PC-9 (cell line): ENCODE measurements at regions of chr5 and their contacts with region 1.

Region 1: GRCh38 chr5:157743163-157744050 is at the start of gene LSM11:
- DNase-seq: peak; percentile 66 to 94
- H3K4me3 ChIP-seq: peak within 1 kb of the TSS; percentile 89
- H3K27ac ChIP-seq: no peak within 1 kb of the TSS
- H3K4me1 ChIP-seq: peaks cover 12% of the 10 kb centered on the region
- H3K27me3 ChIP-seq: no peaks in the 10 kb centered on the region
- CTCF ChIP-seq: peak; percentile 95
- total RNA-seq, gene LSM11: 1.9 and 2.1 TPM in 2 replicates

Region 2: DNA sequence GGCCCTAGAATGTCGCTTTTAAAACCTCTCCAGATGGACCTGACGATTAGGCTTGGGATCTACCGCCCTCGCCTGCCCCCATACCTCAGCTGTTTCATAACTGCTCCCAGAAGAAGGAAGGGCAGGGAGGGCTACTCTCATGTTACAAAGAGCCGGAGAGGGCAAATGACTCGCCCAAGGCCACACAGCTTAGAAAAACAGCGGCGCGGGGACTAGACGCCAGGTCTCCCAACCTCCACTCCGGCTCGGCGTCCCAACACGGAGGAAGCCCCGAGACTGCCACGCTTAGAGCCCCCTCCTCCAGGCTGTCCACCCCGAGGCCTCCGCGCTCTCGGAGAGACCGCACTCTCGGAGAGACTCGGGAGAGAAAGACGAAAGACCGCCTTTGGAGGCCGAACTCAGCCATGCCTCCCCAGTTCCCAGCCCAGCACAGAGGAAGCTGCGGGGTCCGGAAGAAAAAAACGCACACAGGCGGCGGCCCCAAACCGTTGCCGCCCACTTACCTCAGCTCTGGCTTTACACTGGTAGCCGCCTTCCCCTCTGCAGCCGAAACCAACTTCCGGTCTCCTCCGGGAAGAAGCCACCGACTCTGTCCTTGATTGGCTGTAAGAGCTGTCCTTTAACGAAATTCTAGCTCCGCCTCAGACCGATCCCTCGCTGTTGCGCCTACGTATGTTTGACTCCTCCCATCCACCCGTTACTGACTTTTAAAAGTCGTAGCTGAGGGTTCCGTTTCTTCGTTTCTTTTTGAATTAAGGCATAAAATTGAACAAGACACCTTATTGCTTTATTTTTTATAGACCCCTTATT is 600.9 kb before region 1 on chr5 and contains the start of gene MED7:
- CTCF ChIA-PET with region 1: no interaction called
- POLR2A ChIA-PET with region 1: interaction called, 8 read pairs
- intact Hi-C with region 1: loop called (anchors 2 kb)
- DNase-seq: peak; percentile 93
- H3K4me3 ChIP-seq: peak within 1 kb of the TSS; percentile 69
- H3K27ac ChIP-seq: peak within 1 kb of the TSS; percentile 57
- H3K4me1 ChIP-seq: peaks cover 11% of the 10 kb centered on the region
- H3K27me3 ChIP-seq: peaks cover 5% of the 10 kb centered on the region; the same call in 1 of the 2 replicates
- CTCF ChIP-seq: no peak
- total RNA-seq, gene MED7: 9.4 and 11.8 TPM in 2 replicates

Region 3: DNA sequence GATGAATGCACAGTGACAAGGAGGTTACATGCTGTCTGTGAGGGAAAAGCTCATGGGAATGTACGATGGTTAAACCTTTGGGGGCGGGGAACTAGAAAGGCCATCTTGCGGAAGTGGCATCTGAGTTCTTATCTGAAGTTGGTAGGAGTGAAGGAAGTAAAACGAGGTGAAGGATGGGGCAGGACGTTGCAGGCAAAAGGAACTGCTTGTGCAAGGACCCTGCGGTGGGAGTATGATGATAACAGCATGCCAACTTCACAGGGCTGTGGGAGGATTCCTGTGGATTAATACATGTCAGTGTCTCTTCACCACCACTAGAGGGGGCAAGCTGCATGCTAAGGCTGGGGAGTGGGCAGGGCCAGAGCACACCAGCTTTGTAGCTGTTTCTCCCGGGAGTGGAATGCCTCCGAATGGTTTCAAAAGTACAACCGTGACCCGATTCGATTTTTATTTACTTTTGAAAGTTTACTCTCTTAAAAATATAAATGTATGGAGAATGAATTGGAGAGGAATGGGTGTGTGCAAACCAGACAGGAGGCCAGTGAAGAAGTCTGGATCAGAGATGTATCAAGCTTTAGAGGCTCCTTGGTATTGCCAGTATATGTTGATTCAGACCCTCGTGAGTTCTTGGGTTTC is 415.0 kb before region 1 on chr5:
- CTCF ChIA-PET with region 1: interaction called, 13 read pairs
- POLR2A ChIA-PET with region 1: no interaction called
- intact Hi-C with region 1: loop called (anchors 1 kb)
- DNase-seq: peak; percentile 50 to 61
- H3K4me3 ChIP-seq: peak overlapping the region; percentile 46; the same call in 1 of the 2 replicates
- H3K27ac ChIP-seq: no peak overlapping the region
- H3K4me1 ChIP-seq: 0 out of 2 replicates have a peak, but pooled peaks cover 4% of the 10 kb centered on the region
- H3K27me3 ChIP-seq: 0 out of 2 replicates have a peak, but pooled peaks cover 5% of the 10 kb centered on the region
- CTCF ChIP-seq: peak; percentile 91

Region 4: GRCh38 chr5:157366741-157367674 is 376.4 kb before region 1 on chr5:
- CTCF ChIA-PET with region 1: no interaction called
- POLR2A ChIA-PET with region 1: no interaction called
- intact Hi-C with region 1: loop called (anchors 1 kb)
- DNase-seq: no peak
- H3K4me3 ChIP-seq: no peak overlapping the region
- H3K27ac ChIP-seq: no peak overlapping the region
- H3K4me1 ChIP-seq: no peaks in the 10 kb centered on the region
- H3K27me3 ChIP-seq: no peaks in the 10 kb centered on the region
- CTCF ChIP-seq: peak; percentile 67

Region 5: DNA sequence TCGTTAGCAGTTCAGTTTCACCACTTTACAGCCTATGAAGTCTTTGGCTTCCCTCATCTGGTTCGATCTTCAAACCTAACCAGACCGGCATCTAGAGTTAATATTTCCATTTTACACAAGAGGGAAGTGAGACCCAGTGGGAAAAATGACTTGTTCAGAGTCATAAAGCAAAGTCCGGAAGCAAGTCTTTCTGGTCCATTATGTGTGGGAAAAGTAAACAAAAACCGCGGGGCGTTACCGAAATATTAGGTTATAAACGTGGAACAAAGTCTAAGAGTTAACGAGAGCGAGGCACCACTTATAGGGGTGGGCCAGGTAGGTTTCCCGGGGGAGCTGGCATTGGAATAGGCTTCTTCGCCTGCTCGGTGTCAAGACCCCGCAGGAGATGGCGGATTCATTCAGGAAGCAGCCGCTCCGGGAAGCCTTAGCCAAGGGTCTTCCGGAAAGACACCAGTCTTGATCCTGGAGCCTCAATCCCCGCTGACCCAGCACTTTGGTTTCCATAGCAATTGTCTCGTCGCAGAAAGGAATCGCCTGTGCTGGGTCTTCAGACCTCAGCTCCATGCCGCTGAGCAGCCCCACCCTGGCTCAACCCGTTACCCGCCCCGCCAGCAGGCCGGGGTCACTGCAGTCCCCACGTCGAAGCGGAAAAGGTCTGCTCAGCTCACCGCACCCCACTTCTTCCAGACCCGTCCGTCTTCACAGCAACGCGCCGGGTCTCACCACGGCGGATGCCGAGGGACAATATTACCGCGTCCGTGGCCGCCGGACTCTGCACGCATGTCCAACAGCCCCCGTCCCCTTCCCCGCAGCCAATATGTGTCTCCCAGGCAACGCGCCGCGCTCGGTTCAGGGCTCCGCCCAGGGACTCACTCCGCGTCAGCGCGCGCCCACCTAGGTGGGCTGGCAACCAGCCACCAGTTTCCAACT is 72.5 kb before region 1 on chr5 and contains the start of gene C5orf52:
- CTCF ChIA-PET with region 1: interaction called, 3 read pairs
- POLR2A ChIA-PET with region 1: no interaction called
- intact Hi-C with region 1: loop called (anchors 1 kb)
- DNase-seq: no peak
- H3K4me3 ChIP-seq: no peak within 1 kb of the TSS
- H3K27ac ChIP-seq: no peak within 1 kb of the TSS
- H3K4me1 ChIP-seq: peaks cover 3% of the 10 kb centered on the region
- H3K27me3 ChIP-seq: no peaks in the 10 kb centered on the region
- CTCF ChIP-seq: no peak
- total RNA-seq, gene C5orf52: not detected in 2 replicates

Region 6: DNA sequence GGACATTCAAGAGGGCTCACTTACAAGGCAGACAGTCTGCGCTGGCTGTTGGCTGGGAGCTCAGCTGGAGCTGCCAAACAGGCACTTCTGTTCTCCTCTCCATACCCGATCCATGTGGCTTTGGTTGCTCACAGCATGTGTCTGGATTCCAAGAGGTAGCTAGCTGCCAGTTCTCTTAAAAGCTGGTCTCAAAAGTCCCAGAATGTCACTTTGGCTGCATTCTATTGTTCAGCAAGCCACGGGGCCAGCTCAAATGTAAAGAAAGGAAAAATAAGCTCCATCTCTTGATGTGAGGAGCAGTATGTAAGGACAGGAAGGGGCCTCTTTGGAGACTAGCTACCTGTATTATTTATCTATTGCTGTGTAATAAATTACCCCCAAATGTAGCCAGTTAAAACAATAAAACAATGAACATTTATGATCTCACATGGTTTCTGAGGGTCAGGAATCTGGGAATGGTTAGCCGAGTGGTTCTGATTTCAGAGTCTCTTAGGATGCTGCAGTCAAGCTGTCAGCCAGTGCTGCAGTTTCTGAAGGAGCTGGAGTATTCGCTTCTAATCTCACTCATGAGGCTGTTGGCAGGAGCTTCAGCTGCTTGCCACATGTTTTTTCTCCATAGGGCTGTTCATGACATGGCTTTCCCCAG is 228.3 kb after region 1 on chr5:
- CTCF ChIA-PET with region 1: no interaction called
- POLR2A ChIA-PET with region 1: no interaction called
- intact Hi-C with region 1: no loop called
- DNase-seq: no peak
- H3K4me3 ChIP-seq: no peak overlapping the region
- H3K27ac ChIP-seq: no peak overlapping the region
- H3K4me1 ChIP-seq: no peaks in the 10 kb centered on the region
- H3K27me3 ChIP-seq: no peaks in the 10 kb centered on the region
- CTCF ChIP-seq: no peak